OCI-LY7 (cell line): ENCODE measurements at regions of chr1 and their contacts with region 1.

Region 1: DNA sequence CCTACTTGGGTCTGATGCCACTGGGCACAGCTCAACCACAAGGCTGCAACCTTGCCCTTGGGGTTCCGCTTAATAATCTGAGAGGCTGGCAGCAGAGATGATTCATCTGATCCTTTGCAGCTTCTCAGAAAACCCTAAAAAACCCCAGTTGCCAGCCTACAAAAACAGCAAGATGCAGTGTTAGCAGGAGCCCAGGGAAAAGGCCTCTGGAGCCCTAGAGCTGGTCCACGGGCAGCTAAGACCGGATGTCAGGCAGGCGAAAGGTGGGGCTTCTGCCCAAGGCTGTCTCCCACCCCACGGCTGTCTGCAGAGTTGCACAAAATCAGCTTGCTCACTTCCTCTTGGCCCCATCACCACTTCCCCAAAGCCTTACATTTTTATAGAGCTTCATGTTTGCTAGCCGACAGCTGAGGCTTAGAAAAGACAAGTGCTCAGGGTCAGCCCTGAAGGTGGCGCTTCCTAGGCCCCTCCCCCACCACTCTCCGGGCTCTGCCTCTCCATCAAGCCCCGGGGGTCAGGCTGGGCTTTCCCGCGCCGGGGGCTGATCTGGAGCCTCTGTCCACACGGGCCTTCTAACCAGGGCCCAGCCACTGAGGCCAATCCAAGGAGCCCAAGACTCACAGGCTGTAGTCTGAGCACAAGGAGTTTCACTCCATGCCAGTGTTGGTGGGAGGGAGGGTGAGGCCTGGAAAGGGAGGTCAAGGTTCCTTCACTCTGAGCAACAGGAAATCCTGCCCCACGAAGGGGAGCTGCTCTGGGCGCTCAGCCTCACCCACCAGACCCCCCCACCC is 4.2 kb upstream of the ADORA3 start:
- DNase-seq: peak; percentile 97
- H3K4me3 ChIP-seq: peak overlapping the region; percentile 63
- H3K27ac ChIP-seq: peak overlapping the region; percentile 97
- H3K4me1 ChIP-seq: peaks cover 75% of the 10 kb centered on the region
- CTCF ChIP-seq: no peak

Region 2: GRCh38 chr1:111346089-111346885 is 161.3 kb before region 1 on chr1:
- CTCF ChIA-PET with region 1: no interaction called
- POLR2A ChIA-PET with region 1: no interaction called
- intact Hi-C with region 1: no loop called
- DNase-seq: peak; percentile 78
- H3K4me3 ChIP-seq: peak overlapping the region; percentile 62
- H3K27ac ChIP-seq: no peak overlapping the region
- H3K4me1 ChIP-seq: peaks cover 8% of the 10 kb centered on the region
- CTCF ChIP-seq: peak; percentile 60

Region 3: DNA sequence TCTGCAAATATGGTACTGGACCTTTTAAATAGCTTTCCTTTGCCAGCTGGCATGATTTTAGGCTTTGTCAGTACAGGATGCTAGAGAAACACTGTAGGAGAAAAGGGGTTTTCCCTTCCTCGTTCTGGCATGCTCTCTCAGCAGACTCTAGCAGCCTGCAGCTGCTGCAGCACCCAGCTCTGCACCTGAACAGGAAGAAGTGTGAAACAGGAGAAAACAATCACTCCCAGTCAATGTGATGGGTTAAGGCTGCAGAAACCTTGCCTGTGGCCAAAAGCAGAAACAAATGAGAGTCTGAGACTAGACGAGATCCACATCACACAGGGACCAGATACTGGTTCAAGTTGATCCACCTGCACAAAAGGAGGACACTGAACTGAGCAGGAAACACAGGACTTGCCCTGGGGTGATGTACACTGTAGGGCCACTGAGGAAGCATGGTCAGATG is 101.3 kb before region 1 on chr1:
- CTCF ChIA-PET with region 1: no interaction called
- POLR2A ChIA-PET with region 1: no interaction called
- intact Hi-C with region 1: loop called (anchors 2 kb)
- DNase-seq: peak; percentile 97
- H3K4me3 ChIP-seq: peak overlapping the region; percentile 46
- H3K27ac ChIP-seq: peak overlapping the region; percentile 94
- H3K4me1 ChIP-seq: peaks cover 61% of the 10 kb centered on the region
- CTCF ChIP-seq: no peak

Region 4: GRCh38 chr1:111481387-111482221 is 26.0 kb before region 1 on chr1:
- CTCF ChIA-PET with region 1: interaction called, 9 read pairs
- POLR2A ChIA-PET with region 1: interaction called, 9 read pairs
- intact Hi-C with region 1: loop called (anchors 2 kb)
- DNase-seq: peak; percentile 65
- H3K4me3 ChIP-seq: no peak overlapping the region
- H3K27ac ChIP-seq: no peak overlapping the region
- H3K4me1 ChIP-seq: peaks cover 21% of the 10 kb centered on the region
- CTCF ChIP-seq: peak; percentile 78

Region 5: DNA sequence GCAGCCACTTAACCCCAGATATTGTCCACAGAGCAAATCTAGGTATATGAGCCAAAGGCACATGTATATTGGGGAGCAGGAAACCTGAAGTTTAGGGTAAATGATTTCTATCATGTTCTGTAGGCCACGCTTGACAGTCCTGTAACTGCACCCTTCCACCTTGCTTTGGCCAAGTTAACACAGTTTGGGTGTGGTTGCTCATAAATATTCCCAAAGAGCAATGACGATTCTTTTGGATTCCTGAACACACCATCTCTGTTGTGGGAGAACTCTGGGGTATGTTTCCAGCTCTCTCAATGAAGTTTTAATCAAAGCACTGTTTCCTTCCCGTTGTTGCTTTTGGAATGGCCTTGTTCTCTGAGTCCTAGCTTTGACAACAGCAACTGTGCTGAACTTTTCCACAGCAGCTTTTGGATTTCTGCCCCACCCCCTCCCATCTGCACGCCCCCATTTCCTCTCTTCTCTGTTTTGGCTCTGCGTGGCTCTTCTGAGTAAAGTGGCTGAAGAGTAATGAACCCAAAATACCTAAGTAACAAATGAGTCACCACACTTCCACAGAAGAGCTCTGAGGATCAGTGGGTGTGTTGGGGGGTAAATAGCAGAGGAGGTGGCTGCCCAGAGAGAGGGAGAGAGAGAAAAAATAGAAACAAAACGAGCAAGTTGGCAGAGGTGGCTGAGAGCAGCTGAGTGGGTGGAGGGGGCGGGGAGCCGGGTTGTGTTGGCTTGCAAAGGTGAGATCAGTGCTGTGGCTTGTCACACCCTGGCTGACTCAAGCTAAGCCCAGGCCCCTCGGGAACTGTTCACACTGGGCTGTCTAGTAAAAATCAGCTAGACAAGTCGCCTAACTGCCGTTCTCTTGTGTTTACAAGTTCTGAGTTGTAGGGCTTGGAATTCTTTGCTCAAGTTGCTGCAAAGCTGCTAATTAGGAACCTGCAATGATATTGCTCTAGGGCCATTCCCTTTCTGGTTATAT is 85.1 kb after region 1 on chr1:
- CTCF ChIA-PET with region 1: no interaction called
- POLR2A ChIA-PET with region 1: interaction called, 20 read pairs
- intact Hi-C with region 1: no loop called
- DNase-seq: peak; percentile 65
- H3K4me3 ChIP-seq: peak overlapping the region; percentile 25
- H3K27ac ChIP-seq: no peak overlapping the region
- H3K4me1 ChIP-seq: peaks cover 45% of the 10 kb centered on the region
- CTCF ChIP-seq: no peak

Region 6: GRCh38 chr1:111619635-111620440 is 112.2 kb after region 1 on chr1 and contains the start of gene RAP1A:
- CTCF ChIA-PET with region 1: interaction called, 5 read pairs
- POLR2A ChIA-PET with region 1: interaction called, 19 read pairs
- intact Hi-C with region 1: loop called (anchors 1 kb)
- DNase-seq: peak; percentile 92
- H3K4me3 ChIP-seq: peak within 1 kb of the TSS; percentile 94
- H3K27ac ChIP-seq: peak within 1 kb of the TSS; percentile 53
- H3K4me1 ChIP-seq: peaks cover 79% of the 10 kb centered on the region
- CTCF ChIP-seq: no peak
- total RNA-seq, gene RAP1A: 8.5 and 10.4 TPM in 2 replicates

Region 7: DNA sequence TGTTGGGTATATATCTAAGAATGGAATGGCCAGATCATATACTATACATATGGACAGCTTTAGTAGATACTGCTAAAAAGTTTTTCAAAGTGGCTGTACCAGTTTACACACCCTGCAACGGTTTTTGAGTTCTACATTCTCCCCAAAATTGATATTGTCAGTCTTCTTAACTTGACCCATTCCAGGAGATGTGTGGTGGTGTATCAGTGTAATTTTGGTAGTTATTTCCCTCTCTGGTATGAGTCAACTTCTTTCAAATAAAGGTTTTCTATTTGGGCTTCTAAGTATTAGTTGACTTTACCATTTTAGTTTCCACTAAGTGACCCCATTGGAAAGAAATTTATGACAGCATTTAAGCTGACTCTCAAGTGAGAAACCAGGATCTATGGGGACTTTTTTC is 202.4 kb after region 1 on chr1:
- CTCF ChIA-PET with region 1: interaction called, 8 read pairs
- POLR2A ChIA-PET with region 1: interaction called, 4 read pairs
- intact Hi-C with region 1: loop called (anchors 2 kb)
- DNase-seq: no peak
- H3K4me3 ChIP-seq: no peak overlapping the region
- H3K27ac ChIP-seq: no peak overlapping the region
- H3K4me1 ChIP-seq: no peaks in the 10 kb centered on the region
- CTCF ChIP-seq: no peak

Region 8: GRCh38 chr1:111755331-111756123 is 247.9 kb after region 1 on chr1 and contains the start of gene DDX20:
- CTCF ChIA-PET with region 1: interaction called, 5 read pairs
- POLR2A ChIA-PET with region 1: interaction called, 18 read pairs
- intact Hi-C with region 1: loop called (anchors 1 kb)
- DNase-seq: peak; percentile 95
- H3K4me3 ChIP-seq: peak within 1 kb of the TSS; percentile 83
- H3K27ac ChIP-seq: peak within 1 kb of the TSS; percentile 81
- H3K4me1 ChIP-seq: peaks cover 59% of the 10 kb centered on the region
- CTCF ChIP-seq: peak; percentile 94
- total RNA-seq, gene DDX20: 28.8 and 32.9 TPM in 2 replicates